Activated T-helper 1 cell treated with anti-CD3 and anti-CD28 coated beads, Interleukin-12 subunit alpha, Interleukin-12 subunit beta, Interleukin-2, Interleukin-4 antibody, amounts not matched to agents 30 ng/mL and 10 ng/mL and 1 ng/mL, durations not matched to agents 14 hours and 24 hours and 36 hours (primary cell): ENCODE measurements at regions of chr7 and their contacts with region 1.

Region 1: GRCh38 chr7:76314042-76314721 is 11.7 kb downstream of the HSPB1 start:
- DNase-seq: peak; percentile 92
- H3K4me3 Mint-ChIP-seq: no peak overlapping the region
- H3K27ac Mint-ChIP-seq: peak overlapping the region; percentile 55
- H3K4me1 Mint-ChIP-seq: peaks cover 24% of the 10 kb centered on the region
- H3K27me3 Mint-ChIP-seq: no peaks in the 10 kb centered on the region

Region 2: DNA sequence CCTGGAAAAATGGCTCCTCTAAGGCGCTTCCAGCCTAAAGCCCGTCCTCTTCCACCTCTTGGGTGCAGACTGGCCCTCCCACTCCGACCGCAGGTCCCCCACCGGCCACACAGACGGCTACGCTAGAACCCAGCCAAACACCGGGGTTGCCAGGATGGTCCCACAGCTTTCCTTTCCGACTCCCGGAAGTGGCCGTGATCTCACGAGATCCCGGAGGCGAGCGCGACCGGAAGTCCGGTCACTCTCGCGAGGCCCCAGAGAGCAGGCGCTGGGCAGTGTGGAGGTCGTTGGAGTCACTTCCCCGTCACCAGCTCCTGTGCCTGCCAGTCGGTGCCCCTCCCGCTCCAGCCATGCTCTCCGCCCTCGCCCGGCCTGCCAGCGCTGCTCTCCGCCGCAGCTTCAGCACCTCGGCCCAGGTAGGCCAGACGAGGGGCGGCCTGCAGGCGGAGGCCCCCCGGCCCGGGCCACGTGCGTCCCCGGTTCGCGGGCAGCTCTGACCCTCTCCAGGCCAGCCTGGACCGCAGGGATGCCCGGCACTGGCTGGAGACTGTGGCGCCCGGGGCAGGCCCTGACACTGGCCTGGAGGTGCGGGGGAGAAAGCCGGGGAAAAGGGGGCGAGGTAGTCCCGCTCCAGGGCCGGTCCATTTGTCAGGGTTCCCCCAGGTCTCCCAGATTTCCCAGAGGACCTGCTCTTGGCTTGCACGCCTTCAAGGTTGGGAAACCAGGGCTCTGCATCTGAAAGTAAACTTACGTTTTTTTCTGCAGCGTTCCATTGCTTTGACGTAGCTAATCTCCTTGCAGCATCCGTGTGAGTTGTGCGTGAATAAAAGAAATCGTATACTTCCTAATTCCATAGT is 266.1 kb before region 1 on chr7 and contains the starts of genes MDH2 and STYXL1:
- intact Hi-C with region 1: loop called (anchors 1 kb)
- DNase-seq: peak; percentile 90
- H3K4me3 Mint-ChIP-seq: peak within 1 kb of the TSS; percentile 99
- H3K27ac Mint-ChIP-seq: peak within 1 kb of the TSS; percentile 97
- H3K4me1 Mint-ChIP-seq: peaks cover 53% of the 10 kb centered on the region
- H3K27me3 Mint-ChIP-seq: no peaks in the 10 kb centered on the region
- total RNA-seq, gene MDH2: 249 and 292 TPM in 2 replicates
- total RNA-seq, gene STYXL1: 35.3 and 38.7 TPM in 2 replicates

Region 3: DNA sequence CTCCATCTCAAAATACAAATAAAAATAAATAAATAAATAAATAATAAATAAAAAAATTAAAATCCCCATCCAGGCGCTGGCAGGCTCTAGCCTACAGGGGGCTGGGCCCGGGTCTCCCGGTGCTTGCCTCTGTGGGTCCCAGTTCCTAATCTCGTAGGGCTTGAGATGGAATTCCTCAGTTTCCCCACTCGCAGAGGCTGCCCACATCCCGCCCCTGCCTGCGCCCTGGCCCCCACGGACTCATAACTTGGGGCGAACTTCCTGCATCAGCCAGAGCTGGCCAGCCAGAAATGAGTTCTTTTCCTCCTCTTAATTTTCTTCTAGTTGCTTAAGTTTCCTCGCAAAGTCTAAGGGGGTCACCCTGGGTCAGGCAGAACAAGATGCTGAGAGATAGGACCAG is 134.5 kb before region 1 on chr7:
- intact Hi-C with region 1: loop called (anchors 1 kb)
- DNase-seq: no peak
- H3K4me3 Mint-ChIP-seq: no peak overlapping the region
- H3K27ac Mint-ChIP-seq: no peak overlapping the region
- H3K4me1 Mint-ChIP-seq: peaks cover 6% of the 10 kb centered on the region
- H3K27me3 Mint-ChIP-seq: no peaks in the 10 kb centered on the region

Region 4: GRCh38 chr7:76234931-76235441 is 79.2 kb before region 1 on chr7:
- intact Hi-C with region 1: loop called (anchors 1 kb)
- DNase-seq: peak; percentile 75
- H3K4me3 Mint-ChIP-seq: peak overlapping the region; percentile 53
- H3K27ac Mint-ChIP-seq: no peak overlapping the region
- H3K4me1 Mint-ChIP-seq: no peaks in the 10 kb centered on the region
- H3K27me3 Mint-ChIP-seq: peaks cover 27% of the 10 kb centered on the region

Region 5: DNA sequence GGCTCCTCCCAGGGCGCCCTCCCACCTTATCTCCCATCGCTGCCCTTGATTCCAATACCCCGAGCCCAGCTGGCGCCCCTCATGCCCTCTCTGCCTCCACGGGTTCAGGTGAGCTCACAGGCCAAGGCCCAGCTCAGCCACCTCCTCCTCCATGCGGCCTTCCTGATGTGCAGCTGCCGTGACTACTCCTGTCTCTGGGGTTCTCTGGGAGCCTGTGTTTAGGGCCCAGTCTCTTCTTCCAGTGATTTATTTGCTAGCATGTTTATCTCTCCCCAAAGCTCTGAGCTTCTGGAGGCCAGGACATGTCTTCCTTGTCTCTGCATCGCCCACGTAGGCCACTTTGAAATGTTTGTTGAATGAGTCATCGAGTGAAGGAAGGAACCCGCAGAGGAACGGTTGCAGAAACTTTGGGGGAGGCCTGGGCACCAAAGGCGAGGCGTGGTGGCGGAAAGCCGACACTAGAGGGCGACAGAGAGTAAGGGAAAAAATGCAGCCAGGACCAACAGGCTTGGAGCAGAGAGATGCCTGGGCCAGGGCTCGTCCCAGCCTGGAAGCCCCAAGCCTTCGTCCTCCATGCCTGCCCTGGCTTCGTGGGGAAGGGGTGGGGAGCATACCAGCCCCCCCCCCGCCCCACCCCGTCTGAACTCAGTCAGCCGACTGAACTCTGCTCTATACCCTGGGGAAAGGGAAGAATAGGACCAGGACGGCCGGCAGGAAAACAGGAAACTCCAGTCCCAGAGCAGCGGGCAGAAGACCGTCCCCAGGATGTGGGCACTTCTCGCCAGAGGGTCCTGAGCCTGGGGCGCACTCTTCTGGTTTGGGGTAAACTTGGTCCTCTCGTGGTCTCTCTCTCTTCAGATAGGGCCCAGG is 22.6 kb before region 1 on chr7:
- intact Hi-C with region 1: loop called (anchors 1 kb)
- DNase-seq: peak; percentile 84
- H3K4me3 Mint-ChIP-seq: peak overlapping the region; percentile 43
- H3K27ac Mint-ChIP-seq: peak overlapping the region; percentile 64
- H3K4me1 Mint-ChIP-seq: peaks cover 13% of the 10 kb centered on the region
- H3K27me3 Mint-ChIP-seq: peaks cover 11% of the 10 kb centered on the region

Region 6: GRCh38 chr7:76346778-76347177 is 32.6 kb after region 1 on chr7:
- intact Hi-C with region 1: loop called (anchors 2 kb)
- DNase-seq: no peak
- H3K4me3 Mint-ChIP-seq: peak overlapping the region; percentile 3
- H3K27ac Mint-ChIP-seq: peak overlapping the region; percentile 61
- H3K4me1 Mint-ChIP-seq: peaks cover 61% of the 10 kb centered on the region
- H3K27me3 Mint-ChIP-seq: no peaks in the 10 kb centered on the region

Region 7: DNA sequence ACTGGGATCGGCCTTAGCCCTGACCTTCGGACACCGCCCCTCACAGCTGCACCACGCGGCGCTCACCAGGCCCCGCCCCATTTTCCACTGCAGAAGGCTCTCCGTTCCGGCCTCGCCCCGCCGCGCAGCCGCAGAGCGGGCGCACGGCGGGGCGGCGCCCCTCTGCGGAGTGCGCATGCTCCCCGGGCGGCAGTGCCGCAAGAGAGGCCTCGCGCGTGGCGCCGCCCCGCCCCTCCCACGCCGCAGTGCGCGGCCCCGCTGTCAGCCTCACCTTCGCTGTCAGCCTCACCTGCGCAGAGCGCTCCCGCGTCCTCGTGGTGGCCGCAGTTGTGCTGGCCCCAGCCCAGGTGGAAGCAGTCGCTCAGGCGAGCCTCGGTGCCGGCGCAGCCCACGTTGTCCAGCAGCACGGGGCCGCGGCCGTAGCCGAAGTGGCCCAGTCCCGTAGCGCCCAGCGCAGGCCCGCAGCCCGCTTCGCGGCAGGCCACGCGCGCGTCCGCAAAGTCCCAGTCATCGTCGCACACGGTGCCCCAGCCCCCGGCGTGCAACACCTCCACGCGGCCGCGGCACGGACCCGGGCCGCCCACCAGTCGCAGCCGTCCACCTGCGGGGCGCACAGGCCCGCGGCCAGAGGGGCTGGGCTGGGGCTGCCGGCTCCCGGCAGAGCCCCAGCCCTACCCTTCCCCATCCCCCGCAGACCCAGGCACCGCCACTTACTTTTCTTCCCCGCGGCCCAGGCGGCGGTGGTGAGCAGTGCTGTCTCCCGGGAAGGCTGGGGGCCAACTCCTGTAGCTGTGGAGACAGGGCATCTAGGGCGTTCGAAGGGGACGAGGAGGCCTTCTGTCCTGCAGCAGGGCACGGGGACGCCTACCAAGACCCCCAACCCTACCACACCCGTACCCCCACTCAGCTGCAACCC is 79.2 kb after region 1 on chr7:
- intact Hi-C with region 1: loop called (anchors 1 kb)
- DNase-seq: peak; percentile 90
- H3K4me3 Mint-ChIP-seq: peak overlapping the region; percentile 86
- H3K27ac Mint-ChIP-seq: peak overlapping the region; percentile 97
- H3K4me1 Mint-ChIP-seq: peaks cover 33% of the 10 kb centered on the region
- H3K27me3 Mint-ChIP-seq: peaks cover 2% of the 10 kb centered on the region